ENCODE measurements at regions of chr3 and their contacts with region 1.

Region 1: GRCh38 chr3:58491506-58492402 is at the start of gene KCTD6:
- DNase-seq: peak; percentile 85
- ATAC-seq: peak; percentile 90
- H3K4me3 Mint-ChIP-seq: peak within 1 kb of the TSS; percentile 81
- H3K27ac Mint-ChIP-seq: peak within 1 kb of the TSS; percentile 89
- H3K4me1 Mint-ChIP-seq: peaks cover 35% of the 10 kb centered on the region
- H3K27me3 Mint-ChIP-seq: peaks cover 2% of the 10 kb centered on the region
- CTCF ChIP-seq: peak; percentile 57
- total RNA-seq, gene KCTD6: 5.6 to 5.8 TPM

Region 2: GRCh38 chr3:58383904-58384303 is 107.8 kb before region 1 on chr3:
- CTCF ChIA-PET with region 1: no interaction called
- POLR2A ChIA-PET with region 1: no interaction called
- intact Hi-C with region 1: no loop called
- DNase-seq: no peak
- ATAC-seq: no peak
- H3K4me3 Mint-ChIP-seq: no peak overlapping the region
- H3K27ac Mint-ChIP-seq: no peak overlapping the region
- H3K4me1 Mint-ChIP-seq: peaks cover 2% of the 10 kb centered on the region
- H3K27me3 Mint-ChIP-seq: no peaks in the 10 kb centered on the region
- CTCF ChIP-seq: no peak

Region 3: DNA sequence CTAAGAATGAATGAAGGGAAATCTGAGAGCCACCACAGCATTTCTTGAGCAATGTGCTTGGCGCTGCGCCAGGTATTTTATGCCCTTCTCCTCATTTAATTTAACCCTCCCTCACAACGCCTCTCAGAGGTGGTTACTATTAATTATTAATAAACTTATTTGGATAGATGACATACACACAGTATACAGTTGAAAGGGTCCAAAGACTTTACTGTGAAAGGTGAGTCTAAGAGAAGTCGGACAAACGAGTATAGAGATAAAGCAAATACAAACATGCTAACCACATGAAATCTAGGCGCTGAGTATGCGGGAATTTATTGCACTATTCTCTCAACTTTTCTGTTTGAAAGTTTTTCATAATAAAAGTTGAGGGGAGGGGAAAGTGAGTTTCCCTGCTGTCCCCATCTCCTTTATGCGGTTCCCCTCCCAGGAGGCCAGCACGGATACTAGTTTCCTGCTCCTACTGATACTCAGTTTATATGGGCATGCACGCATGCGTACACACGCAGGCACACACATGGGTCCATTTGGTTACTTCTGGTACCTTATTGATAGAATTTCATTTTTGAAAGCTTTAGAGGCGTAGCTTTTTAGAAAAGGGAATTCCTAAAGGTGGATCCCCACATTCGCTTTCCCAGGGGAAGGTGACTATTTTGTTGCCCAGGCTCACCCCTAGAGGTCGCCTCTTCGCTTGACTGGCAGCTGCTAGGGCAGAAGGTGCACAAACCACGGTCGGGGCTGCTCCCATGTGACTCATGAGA is 28.4 kb before region 1 on chr3:
- CTCF ChIA-PET with region 1: interaction called, 30 read pairs
- POLR2A ChIA-PET with region 1: no interaction called
- intact Hi-C with region 1: loop called (anchors 5 kb)
- DNase-seq: peak; percentile 90
- ATAC-seq: peak; percentile 97
- H3K4me3 Mint-ChIP-seq: peak overlapping the region; percentile 31
- H3K27ac Mint-ChIP-seq: no peak overlapping the region
- H3K4me1 Mint-ChIP-seq: peaks cover 14% of the 10 kb centered on the region
- H3K27me3 Mint-ChIP-seq: no peaks in the 10 kb centered on the region
- CTCF ChIP-seq: peak; percentile 95

Region 4: DNA sequence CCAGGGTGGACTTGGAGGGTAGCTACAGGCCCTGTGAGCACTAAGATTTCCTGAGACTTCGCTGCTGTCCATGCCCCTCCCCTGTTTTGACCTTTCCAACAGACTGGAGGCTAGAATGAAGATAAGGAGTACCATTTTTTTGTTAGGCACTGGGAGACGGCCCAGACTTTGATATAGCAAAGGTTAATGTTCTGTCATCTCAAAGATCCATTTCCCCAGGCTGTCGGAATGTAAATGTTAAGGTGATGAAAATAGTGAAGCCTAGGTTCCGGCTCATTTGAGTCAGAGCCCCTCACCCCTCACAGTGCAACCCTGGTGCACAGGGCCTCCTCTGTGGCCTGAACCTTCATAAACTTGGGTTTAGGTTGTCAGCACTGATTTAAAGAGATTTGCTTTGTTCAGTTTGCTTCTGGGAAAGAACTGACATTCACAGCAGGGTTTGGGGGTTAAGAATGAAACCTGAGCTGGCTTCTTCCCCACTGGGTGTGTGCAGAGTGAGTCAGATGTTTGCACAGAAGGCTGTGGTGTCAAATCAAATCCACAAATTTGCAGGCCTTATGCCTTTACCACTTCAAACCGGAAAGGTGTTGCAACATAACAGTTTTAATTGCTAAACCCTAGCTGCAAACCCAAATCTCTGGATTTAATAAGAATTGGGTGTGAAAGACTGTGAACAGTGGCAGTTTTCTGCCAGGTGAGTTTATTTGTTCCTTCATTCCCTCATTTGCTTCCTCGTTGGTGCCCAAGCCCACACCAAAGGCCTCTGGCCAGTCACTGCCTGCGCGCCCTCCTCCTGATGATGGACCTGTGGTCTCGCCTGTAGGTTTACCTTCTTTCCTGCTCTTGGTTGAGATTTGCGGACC is 20.5 kb before region 1 on chr3:
- CTCF ChIA-PET with region 1: interaction called, 30 read pairs
- POLR2A ChIA-PET with region 1: interaction called, 3 read pairs
- intact Hi-C with region 1: no loop called
- DNase-seq: peak; percentile 74
- ATAC-seq: peak; percentile 95
- H3K4me3 Mint-ChIP-seq: no peak overlapping the region
- H3K27ac Mint-ChIP-seq: peak overlapping the region; percentile 44
- H3K4me1 Mint-ChIP-seq: peaks cover 37% of the 10 kb centered on the region
- H3K27me3 Mint-ChIP-seq: no peaks in the 10 kb centered on the region
- CTCF ChIP-seq: no peak